ENCODE measurements at regions of chr10 and their contacts with region 1.

Region 1: GRCh38 chr10:31808258-31809218 is 120.1 kb downstream of the ARHGAP12 start:
- DNase-seq: peak in 1 of 2 donors; percentile 39
- ATAC-seq: peak in 7 of 8 donors; percentile 75 to 90 (median 82)
- H3K4me3 ChIP-seq: peak overlapping the region in 9 of 10 donors; percentile 26 to 55 (median 47)
- H3K27ac ChIP-seq: peak overlapping the region; percentile 25 to 86 (median 77)
- H3K4me1 ChIP-seq: peaks cover 0 to 22% (median 11%) of the 10 kb centered on the region in 9 donors
- H3K27me3 ChIP-seq: no peaks in the 10 kb centered on the region
- CTCF ChIP-seq: peak; percentile 38 to 78 (median 66)

Region 2: DNA sequence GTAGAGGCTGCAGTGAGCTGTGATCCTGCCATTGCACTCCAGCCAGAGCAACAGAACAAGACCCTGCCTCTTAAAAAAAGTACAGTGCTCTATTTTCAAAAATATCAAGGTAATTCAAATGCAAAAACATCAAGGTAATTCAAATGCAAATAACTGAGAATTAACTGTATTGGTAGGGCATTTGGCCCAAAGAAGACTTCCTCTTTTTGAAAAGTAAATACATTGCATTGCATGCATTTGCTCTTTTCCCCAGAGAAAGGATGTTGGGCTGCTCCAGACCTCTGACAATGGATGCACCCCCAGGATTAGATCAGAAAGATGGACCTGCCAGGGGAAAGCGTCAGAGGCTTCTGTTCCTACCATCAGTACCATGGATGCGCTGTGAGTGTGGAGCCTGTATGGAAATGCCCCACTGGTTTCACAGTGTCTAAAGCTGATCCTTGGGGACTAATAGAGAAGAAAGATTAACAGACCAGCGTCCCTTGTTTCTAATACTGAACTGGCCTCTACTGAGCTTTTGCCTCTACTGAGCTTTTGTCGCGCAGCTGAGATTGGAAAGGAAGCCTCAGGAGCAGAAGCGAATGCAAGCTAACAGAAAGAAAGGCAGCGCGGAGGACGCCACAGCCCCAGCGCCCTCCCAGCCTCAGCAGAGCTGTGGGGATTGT is 1085.5 kb before region 1 on chr10:
- intact Hi-C with region 1: loop called in 6 of 10 experiments (anchors 2 to 10 kb)
- DNase-seq: no peak
- ATAC-seq: no peak
- H3K4me3 ChIP-seq: no peak overlapping the region
- H3K27ac ChIP-seq: no peak overlapping the region
- H3K4me1 ChIP-seq: peaks cover 0 to 9% (median 0%) of the 10 kb centered on the region in 9 donors
- H3K27me3 ChIP-seq: peaks cover 0 to 4% (median 0%) of the 10 kb centered on the region in 7 donors
- CTCF ChIP-seq: no peak

Region 3: GRCh38 chr10:30751678-30752331 is 1056.7 kb before region 1 on chr10:
- intact Hi-C with region 1: loop called in 6 of 10 experiments (anchors 2 to 10 kb)
- DNase-seq: peak; percentile 29 to 76
- ATAC-seq: peak; percentile 66 to 94 (median 82)
- H3K4me3 ChIP-seq: no peak overlapping the region
- H3K27ac ChIP-seq: peak overlapping the region in 6 of 10 donors; percentile 34 to 58 (median 44)
- H3K4me1 ChIP-seq: peaks cover 0 to 30% (median 13%) of the 10 kb centered on the region in 9 donors
- H3K27me3 ChIP-seq: peaks cover 0 to 3% (median 0%) of the 10 kb centered on the region in 7 donors
- CTCF ChIP-seq: peak in 8 of 9 donors; percentile 31 to 97 (median 86)

Region 4: GRCh38 chr10:30857803-30858202 is 950.7 kb before region 1 on chr10:
- intact Hi-C with region 1: loop called in 1 of 10 experiments (anchors 5 kb)
- DNase-seq: peak; percentile 59 to 73
- ATAC-seq: peak; percentile 85 to 94 (median 91)
- H3K4me3 ChIP-seq: no peak overlapping the region
- H3K27ac ChIP-seq: peak overlapping the region; percentile 11 to 81 (median 69)
- H3K4me1 ChIP-seq: peaks cover 7 to 69% (median 31%) of the 10 kb centered on the region in 9 donors
- H3K27me3 ChIP-seq: no peaks in the 10 kb centered on the region
- CTCF ChIP-seq: no peak

Region 5: GRCh38 chr10:31479752-31480151 is 328.8 kb before region 1 on chr10:
- intact Hi-C with region 1: loop called in 1 of 10 experiments (anchors 10 kb)
- DNase-seq: no peak
- ATAC-seq: no peak
- H3K4me3 ChIP-seq: no peak overlapping the region
- H3K27ac ChIP-seq: no peak overlapping the region
- H3K4me1 ChIP-seq: peaks cover 0 to 6% (median 0%) of the 10 kb centered on the region in 9 donors
- H3K27me3 ChIP-seq: no peaks in the 10 kb centered on the region
- CTCF ChIP-seq: no peak

Region 6: DNA sequence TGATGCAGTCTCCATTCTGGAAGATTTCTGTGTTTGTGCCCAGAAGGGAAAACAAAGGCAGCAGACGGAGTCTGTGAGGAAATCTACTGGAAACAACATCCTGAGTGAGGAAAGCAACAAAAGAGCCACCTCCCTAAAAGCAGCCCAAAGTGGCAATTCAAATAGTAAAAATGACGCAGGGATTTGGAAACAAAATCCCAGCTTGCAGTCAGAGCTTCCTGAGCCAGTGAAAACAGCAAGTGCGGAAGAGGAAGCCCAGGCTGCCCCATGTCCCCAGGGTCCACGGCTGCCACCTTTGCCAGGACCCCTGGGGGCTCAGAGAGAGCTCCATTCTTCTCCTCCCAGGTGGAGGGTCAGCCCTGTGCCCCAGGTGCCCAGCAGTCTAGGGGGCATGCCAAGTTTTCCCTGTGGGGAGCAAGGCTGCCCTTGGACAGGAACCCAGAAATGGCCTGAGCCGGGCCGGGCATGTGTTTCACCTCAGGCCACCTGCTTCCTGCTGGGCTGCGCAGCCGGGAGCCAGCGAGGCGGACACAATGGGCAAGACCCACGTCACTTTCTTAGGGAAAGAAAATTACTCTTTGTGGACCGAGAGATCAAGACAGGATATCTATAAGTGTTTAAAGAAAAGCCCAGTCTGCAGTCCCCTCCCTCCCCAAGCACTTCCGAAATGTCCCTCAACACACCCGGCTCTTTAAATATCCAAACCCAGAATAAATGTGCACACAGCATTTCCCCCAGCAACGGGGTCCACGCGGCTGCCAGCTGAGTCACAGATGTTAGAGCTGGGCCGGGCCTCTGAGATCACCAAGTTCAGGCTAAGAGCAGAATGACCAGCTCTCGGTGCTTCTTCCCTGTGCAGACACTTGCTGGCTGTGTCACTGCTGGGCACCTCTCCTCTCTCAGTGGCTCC is 111.0 kb before region 1 on chr10:
- intact Hi-C with region 1: loop called in 2 of 10 experiments (anchors 5 to 10 kb)
- DNase-seq: peak; percentile 85 to 90
- ATAC-seq: peak; percentile 80 to 91 (median 88)
- H3K4me3 ChIP-seq: peak overlapping the region in 8 of 10 donors; percentile 4 to 38 (median 28)
- H3K27ac ChIP-seq: peak overlapping the region; percentile 91 to 99 (median 96)
- H3K4me1 ChIP-seq: peaks cover 33 to 90% (median 69%) of the 10 kb centered on the region in 9 donors
- H3K27me3 ChIP-seq: no peaks in the 10 kb centered on the region
- CTCF ChIP-seq: no peak

Region 7: DNA sequence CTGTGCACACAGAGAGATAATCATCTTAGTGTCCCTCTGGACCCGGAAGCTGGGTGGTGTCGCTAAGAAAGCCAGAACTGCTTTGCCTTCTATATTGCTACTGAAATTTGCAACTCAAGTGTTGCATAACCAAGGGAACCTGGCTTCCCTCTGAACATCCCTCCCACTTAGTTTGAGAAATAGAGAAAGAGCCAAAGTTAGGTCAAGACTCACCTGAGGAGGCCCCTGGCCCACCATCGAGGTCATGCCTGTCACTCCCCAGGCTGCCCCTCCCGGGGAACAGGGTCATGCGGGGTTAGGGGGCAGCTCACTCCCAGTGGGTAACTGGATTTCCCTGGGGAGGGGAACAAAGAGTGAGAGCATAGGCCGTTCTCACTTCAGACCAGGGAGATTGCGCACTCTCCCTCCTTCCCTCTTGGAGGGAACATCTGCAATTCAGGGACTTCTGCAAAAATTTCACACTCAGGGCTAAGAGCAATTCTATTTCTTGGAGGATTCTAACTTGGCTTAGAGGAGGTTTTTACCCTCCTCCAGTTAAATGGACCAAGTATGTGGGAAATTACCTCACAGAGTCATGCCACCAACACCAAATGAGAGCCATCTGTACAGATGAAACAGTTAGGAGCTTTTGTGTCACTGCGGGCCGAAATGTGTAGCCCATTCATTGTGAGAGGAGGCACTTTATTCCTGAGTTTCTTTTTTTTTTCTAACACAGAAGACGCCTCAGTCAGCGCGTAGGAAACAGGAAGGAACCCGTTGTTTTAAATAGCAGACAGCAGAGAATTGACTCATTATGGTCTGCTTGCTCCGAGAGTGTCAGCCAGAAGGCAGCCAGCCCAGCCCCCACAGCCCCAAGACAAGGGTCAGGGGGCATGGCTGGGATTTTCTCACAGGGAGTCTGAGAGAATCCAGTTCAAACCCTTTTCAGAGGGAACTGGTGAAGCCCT is 101.2 kb before region 1 on chr10:
- intact Hi-C with region 1: loop called in 4 of 10 experiments (anchors 2 to 10 kb)
- DNase-seq: peak; percentile 72 to 83
- ATAC-seq: peak; percentile 82 to 95 (median 89)
- H3K4me3 ChIP-seq: peak overlapping the region in 6 of 10 donors; percentile 26 to 36 (median 34)
- H3K27ac ChIP-seq: peak overlapping the region; percentile 62 to 97 (median 88)
- H3K4me1 ChIP-seq: peaks cover 15 to 64% (median 50%) of the 10 kb centered on the region in 9 donors
- H3K27me3 ChIP-seq: no peaks in the 10 kb centered on the region
- CTCF ChIP-seq: no peak